ENCODE measurements at regions of chr2 and their contacts with region 1.

Region 1: DNA sequence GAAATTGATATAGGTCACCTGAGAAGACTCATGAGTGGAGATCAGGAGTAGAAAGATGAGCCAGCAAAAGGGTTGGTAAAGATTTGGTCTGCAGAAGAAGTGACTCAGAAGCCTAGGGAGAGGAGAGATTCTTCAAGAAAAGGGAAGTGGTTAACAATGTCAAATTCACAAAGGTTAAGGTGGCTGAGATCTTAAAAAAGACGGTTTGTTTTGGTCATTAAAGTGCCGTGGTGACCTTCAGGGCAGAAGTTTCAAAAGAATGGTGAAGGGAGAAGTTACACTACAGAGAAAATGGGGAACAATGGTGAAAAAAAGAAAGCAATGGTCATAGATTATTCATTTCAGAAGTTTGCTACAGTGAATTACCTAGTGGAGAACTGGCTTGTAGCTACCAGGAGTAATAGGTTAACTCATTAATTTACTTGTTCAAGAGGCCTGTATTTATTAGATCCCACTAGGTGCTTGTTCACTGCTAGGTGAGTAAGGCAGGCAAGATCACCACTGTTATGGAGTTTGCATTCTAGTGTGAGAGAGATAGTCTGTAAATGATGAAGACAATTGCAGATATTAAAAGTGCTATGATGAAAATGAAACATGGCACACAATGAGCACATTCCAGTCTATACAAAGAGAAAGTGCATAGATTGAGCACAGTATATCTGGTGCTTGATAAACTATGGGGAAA is 43.0 kb downstream of the FBXO48 start:
- DNase-seq: peak; percentile 98
- ATAC-seq: peak; percentile 85
- H3K4me3 ChIP-seq: peak overlapping the region; percentile 18; the same call in 1 of the 2 replicates
- H3K27ac ChIP-seq: peak overlapping the region; percentile 88
- H3K4me1 ChIP-seq: peaks cover 64% of the 10 kb centered on the region
- H3K27me3 ChIP-seq: no peaks in the 10 kb centered on the region
- CTCF ChIP-seq: no peak
- EP300 ChIP-seq: peak; percentile 91 to 92
- POLR2A ChIP-seq: no peak
- RAD21 ChIP-seq: peak; percentile 18; the same call in 1 of the 2 replicates

Region 2: GRCh38 chr2:68362069-68362468 is 62.0 kb before region 1 on chr2:
- CTCF ChIA-PET with region 1: interaction called, 7 read pairs
- POLR2A ChIA-PET with region 1: interaction called, 14 read pairs
- RAD21 ChIA-PET with region 1: interaction called, 10 read pairs
- SMC1A ChIA-PET with region 1: interaction called, 8 read pairs
- in situ Hi-C with region 1: no loop called
- intact Hi-C with region 1: no loop called
- DNase-seq: peak; percentile 78
- ATAC-seq: peak; percentile 54
- H3K4me3 ChIP-seq: peak overlapping the region; percentile 33; the same call in 1 of the 2 replicates
- H3K27ac ChIP-seq: peak overlapping the region; percentile 94
- H3K4me1 ChIP-seq: peaks cover 21% of the 10 kb centered on the region
- H3K27me3 ChIP-seq: no peaks in the 10 kb centered on the region
- CTCF ChIP-seq: peak; percentile 75 to 92 (median 81)
- EP300 ChIP-seq: peak; percentile 34 to 68; a peak in 1 of 4 replicates
- POLR2A ChIP-seq: peak; percentile 68
- RAD21 ChIP-seq: peak; percentile 97

Region 3: GRCh38 chr2:68368654-68369336 is 55.3 kb before region 1 on chr2:
- CTCF ChIA-PET with region 1: interaction called, 10 read pairs
- POLR2A ChIA-PET with region 1: interaction called, 19 read pairs
- RAD21 ChIA-PET with region 1: interaction called, 15 read pairs
- SMC1A ChIA-PET with region 1: interaction called, 7 read pairs
- in situ Hi-C with region 1: no loop called
- intact Hi-C with region 1: no loop called
- DNase-seq: no peak
- ATAC-seq: no peak; the same call in 1 of the 3 replicates
- H3K4me3 ChIP-seq: peak overlapping the region; percentile 84
- H3K27ac ChIP-seq: peak overlapping the region; percentile 94
- H3K4me1 ChIP-seq: peaks cover 18% of the 10 kb centered on the region
- H3K27me3 ChIP-seq: no peaks in the 10 kb centered on the region
- CTCF ChIP-seq: no peak
- EP300 ChIP-seq: no peak
- POLR2A ChIP-seq: no peak; the same call in 1 of the 2 replicates
- RAD21 ChIP-seq: no peak

Region 4: DNA sequence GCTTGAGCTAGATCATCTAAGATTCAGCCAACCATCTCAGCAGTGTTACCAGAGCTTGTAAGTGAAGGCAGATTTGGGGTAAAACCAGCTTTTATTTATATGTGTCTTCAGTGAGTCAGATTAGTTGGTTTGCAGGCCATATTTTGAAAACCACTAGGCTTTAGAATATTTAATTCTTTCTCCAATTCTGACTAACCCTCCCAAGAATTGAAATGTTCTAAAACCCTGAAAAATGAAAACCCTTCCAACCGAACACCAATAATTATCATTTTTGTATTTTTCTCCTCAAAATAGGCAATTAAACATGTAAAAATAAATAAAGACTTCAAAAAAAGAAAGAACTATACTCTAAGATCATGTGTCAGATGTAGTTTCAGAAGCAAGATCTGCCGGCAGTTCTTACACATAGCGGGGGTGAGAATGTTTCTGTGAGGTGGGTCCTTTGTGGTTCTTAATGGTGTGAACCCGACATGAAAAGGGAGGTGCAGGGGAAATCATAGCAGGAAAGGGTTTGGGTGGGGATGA is 44.9 kb before region 1 on chr2:
- CTCF ChIA-PET with region 1: interaction called, 3 read pairs
- POLR2A ChIA-PET with region 1: interaction called, 19 read pairs
- RAD21 ChIA-PET with region 1: interaction called, 5 read pairs
- SMC1A ChIA-PET with region 1: interaction called, 207 read pairs
- in situ Hi-C with region 1: no loop called
- intact Hi-C with region 1: no loop called
- DNase-seq: no peak
- ATAC-seq: peak; percentile 55
- H3K4me3 ChIP-seq: peak overlapping the region; percentile 48; the same call in 1 of the 2 replicates
- H3K27ac ChIP-seq: peak overlapping the region; percentile 80
- H3K4me1 ChIP-seq: peaks cover 71% of the 10 kb centered on the region
- H3K27me3 ChIP-seq: no peaks in the 10 kb centered on the region
- CTCF ChIP-seq: no peak
- EP300 ChIP-seq: peak; percentile 60 to 73; a peak in 3 of 4 replicates
- POLR2A ChIP-seq: no peak
- RAD21 ChIP-seq: no peak

Region 5: DNA sequence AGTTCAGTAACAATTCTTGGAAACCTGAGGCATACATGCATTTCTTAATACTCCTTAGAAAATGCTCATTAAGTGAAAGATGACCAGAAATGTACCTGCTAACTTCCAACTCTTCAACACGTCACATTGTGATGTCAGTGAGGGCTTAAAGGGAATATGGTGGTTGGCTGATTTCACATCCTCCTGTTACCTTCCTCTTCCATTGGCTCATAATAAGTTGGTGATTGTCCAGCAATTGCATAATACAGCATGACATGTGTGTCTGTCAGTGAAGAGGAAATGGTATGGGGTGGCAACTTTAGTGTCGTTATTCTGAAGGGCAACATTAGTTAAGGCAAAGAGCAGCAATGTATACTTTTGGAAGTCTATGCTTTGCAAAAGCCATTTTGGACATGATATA is 33.0 kb before region 1 on chr2:
- CTCF ChIA-PET with region 1: interaction called, 4 read pairs
- POLR2A ChIA-PET with region 1: interaction called, 40 read pairs
- RAD21 ChIA-PET with region 1: interaction called, 33 read pairs
- SMC1A ChIA-PET with region 1: interaction called, 207 read pairs
- in situ Hi-C with region 1: no loop called
- intact Hi-C with region 1: loop called (anchors 1 kb)
- DNase-seq: no peak
- ATAC-seq: no peak
- H3K4me3 ChIP-seq: peak overlapping the region; percentile 62
- H3K27ac ChIP-seq: peak overlapping the region; percentile 90
- H3K4me1 ChIP-seq: peaks cover 37% of the 10 kb centered on the region
- H3K27me3 ChIP-seq: no peaks in the 10 kb centered on the region
- CTCF ChIP-seq: no peak
- EP300 ChIP-seq: no peak
- POLR2A ChIP-seq: 0 out of 2 replicates have a peak, but pooled peaks have one; percentile 16
- RAD21 ChIP-seq: no peak

Region 6: GRCh38 chr2:68403199-68403644 is 20.9 kb before region 1 on chr2:
- CTCF ChIA-PET with region 1: interaction called, 3 read pairs
- POLR2A ChIA-PET with region 1: interaction called, 4 read pairs
- RAD21 ChIA-PET with region 1: interaction called, 31 read pairs
- SMC1A ChIA-PET with region 1: interaction called, 13 read pairs
- in situ Hi-C with region 1: no loop called
- intact Hi-C with region 1: no loop called
- DNase-seq: no peak
- ATAC-seq: peak; percentile 89
- H3K4me3 ChIP-seq: no peak overlapping the region
- H3K27ac ChIP-seq: peak overlapping the region; percentile 52
- H3K4me1 ChIP-seq: peaks cover 25% of the 10 kb centered on the region
- H3K27me3 ChIP-seq: no peaks in the 10 kb centered on the region
- CTCF ChIP-seq: no peak
- EP300 ChIP-seq: no peak
- POLR2A ChIP-seq: no peak
- RAD21 ChIP-seq: no peak

Region 7: GRCh38 chr2:68452168-68452900 is 28.2 kb after region 1 on chr2:
- CTCF ChIA-PET with region 1: no interaction called
- POLR2A ChIA-PET with region 1: no interaction called
- RAD21 ChIA-PET with region 1: no interaction called
- SMC1A ChIA-PET with region 1: no interaction called
- in situ Hi-C with region 1: no loop called
- intact Hi-C with region 1: no loop called
- DNase-seq: no peak
- ATAC-seq: no peak
- H3K4me3 ChIP-seq: no peak overlapping the region
- H3K27ac ChIP-seq: no peak overlapping the region
- H3K4me1 ChIP-seq: no peaks in the 10 kb centered on the region
- H3K27me3 ChIP-seq: no peaks in the 10 kb centered on the region
- CTCF ChIP-seq: no peak
- EP300 ChIP-seq: no peak
- POLR2A ChIP-seq: no peak
- RAD21 ChIP-seq: no peak